AG04449 (cell line): ENCODE measurements at regions of chr6 and their contacts with region 1.

Region 1: DNA sequence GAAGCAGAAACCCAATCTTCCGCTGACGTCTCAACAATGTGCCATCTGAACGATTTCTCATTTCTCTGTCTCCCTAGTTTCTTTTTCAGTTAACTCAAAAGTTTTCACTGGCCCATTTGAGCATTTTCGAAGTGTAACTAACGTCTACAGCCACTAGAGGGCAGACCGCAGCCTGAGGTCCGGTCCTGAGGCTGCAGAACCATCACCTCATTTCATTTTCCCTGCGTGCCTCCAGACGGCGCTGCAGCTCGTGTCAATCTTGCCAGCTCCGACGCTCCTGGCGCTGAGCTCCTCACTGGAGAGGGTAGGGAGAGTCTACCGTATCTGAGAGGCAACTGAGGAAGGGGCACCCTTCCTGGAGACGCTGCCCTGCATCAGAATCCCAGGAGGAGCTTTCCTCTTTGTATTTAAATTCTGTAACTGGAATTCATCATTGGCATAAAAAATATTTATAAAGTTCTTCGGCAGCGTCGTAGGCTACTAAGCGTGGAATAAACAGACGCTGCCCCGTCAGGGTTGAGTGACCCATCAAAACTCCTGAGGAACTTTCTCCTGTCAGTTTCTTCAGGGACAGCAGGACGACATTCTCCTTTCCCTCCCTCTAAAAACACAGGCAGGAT is 28.5 kb upstream of the DTNBP1 start:
- DNase-seq: peak; percentile 46
- H3K4me3 ChIP-seq: no peak overlapping the region
- CTCF ChIP-seq: peak; percentile 99

Region 2: DNA sequence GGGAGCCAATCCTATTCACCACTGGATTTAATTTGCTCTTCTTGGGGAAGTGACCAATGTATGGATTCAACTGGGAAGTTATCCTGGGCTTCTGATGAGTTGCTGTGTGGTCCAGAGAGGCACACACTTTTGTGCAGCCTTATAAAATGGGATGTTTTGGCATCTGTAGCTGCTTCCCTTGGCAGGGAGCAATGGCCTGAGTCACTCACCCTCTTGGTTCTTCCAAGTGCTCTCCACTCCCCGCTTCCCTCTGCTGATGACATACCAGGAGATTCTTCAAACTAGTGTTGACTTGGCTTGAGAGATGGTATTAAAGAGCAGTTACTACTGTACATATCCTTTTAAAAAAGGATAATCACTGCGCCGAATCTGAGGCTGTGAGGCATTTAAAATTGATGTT is 339.7 kb before region 1 on chr6:
- CTCF ChIA-PET with region 1: no interaction called
- POLR2A ChIA-PET with region 1: no interaction called
- DNase-seq: peak; percentile 65
- H3K4me3 ChIP-seq: no peak overlapping the region
- CTCF ChIP-seq: no peak

Region 3: DNA sequence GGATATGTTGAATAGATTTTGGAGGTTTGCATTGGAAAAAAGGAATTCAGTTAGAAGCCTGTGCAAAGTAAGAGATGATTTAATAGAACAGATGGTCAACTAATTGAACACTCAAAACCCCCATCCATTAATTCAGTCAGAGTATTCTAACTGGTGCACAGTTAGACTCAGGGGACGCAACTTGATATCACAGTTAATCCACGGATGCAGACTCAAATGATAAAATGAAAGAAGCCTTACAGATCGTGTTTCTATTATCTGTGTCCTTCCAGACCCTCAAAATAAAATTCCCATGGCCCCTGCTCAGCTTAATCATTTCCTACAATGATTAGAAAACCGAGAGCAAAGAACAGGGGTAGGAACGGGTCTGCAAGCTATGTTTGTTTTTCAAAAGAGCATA is 16.9 kb after region 1 on chr6:
- CTCF ChIA-PET with region 1: interaction called, 15 read pairs
- POLR2A ChIA-PET with region 1: no interaction called
- DNase-seq: no peak
- H3K4me3 ChIP-seq: no peak overlapping the region
- CTCF ChIP-seq: no peak

Region 4: DNA sequence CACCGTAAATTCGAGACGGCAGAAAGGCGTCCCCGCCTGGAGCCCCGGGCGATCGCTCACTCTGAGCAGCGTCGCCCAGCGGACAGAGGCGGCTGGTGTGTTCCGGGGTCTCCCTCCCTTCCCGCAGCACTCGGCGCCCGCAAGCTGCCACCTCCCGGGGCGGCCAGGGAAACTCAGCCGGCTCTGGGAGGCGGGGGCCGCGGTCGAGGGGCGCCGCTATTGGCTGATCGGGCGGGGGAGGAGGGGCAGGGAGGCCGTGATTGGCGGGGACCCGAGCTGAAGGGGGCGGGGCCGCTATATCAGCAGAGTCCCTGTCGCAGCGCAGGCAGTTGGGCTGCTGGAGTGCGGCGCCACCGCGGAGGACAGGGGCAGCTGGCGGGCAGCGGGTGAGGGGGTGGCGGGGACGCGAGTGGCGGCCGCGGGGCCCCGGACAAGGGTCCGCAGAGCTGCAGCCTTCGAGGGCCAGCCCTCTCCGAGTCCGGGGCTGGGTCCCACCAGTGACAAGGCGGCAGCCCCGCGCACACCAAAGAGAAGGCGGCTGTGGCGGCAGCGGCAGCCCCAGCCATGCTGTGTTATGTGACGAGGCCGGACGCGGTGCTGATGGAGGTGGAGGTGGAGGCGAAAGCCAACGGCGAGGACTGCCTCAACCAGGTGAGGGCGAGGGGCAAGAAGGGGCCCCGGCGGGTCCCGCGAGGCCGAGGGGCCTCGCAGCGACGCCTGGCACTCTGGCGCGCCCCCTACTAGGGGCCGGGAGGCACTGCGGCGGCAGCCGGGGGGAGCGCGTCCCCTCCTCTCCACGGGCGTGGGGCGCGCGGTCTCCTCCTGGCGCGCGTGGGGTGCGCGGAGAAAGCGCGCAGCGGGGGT is 437.6 kb after region 1 on chr6 and contains the start of gene MYLIP:
- CTCF ChIA-PET with region 1: interaction called, 10 read pairs
- POLR2A ChIA-PET with region 1: no interaction called
- DNase-seq: no peak
- H3K4me3 ChIP-seq: peak within 1 kb of the TSS; percentile 83
- CTCF ChIP-seq: peak; percentile 84

Region 5: GRCh38 chr6:16168858-16169257 is 477.5 kb after region 1 on chr6:
- CTCF ChIA-PET with region 1: interaction called, 14 read pairs
- POLR2A ChIA-PET with region 1: no interaction called
- DNase-seq: no peak
- H3K4me3 ChIP-seq: no peak overlapping the region
- CTCF ChIP-seq: peak; percentile 57

Region 6: DNA sequence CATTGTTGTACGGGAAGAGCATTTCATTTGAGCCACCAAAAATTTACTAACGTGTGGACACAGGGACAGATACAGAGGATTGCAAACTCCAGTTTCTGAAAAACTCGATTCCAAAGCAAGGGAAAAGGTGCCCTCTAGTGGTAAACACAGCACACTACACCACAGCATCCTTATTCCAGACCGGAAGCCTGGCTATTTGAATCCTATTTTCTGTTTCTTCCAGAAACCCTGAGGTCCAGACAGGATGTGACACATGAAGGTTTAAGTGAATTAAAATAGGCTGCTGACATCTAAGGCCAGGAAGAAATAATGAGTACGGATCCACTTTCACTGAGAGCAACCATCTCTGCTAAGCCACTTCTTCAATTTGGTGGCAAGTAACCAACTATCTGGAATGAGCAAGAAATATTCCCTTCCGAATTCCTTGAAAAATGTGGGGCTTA is 515.3 kb after region 1 on chr6:
- CTCF ChIA-PET with region 1: interaction called, 145 read pairs
- POLR2A ChIA-PET with region 1: no interaction called
- DNase-seq: peak; percentile 65
- H3K4me3 ChIP-seq: no peak overlapping the region
- CTCF ChIP-seq: peak; percentile 85

Region 7: DNA sequence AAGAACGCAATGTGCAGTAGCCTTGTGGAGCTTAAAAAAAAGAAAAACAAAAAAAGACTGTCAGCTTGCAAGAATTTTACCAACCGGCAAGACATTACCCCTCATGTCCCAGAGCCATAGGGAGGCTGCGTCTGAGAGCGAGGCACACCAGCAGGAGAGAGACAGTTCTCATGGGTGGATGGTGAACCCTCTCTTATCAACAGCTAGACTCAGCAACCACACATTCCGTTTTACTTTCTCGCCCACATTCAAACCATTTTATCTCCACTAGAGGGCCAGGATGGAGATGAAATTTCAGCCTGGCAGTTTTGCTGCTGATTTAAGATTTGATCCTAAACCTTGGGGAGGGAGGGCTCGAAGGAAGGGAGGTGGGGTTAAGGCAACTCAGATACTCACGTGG is 822.9 kb after region 1 on chr6:
- CTCF ChIA-PET with region 1: no interaction called
- POLR2A ChIA-PET with region 1: no interaction called
- DNase-seq: no peak
- H3K4me3 ChIP-seq: no peak overlapping the region
- CTCF ChIP-seq: peak; percentile 51